ENCODE measurements at regions of chr14 and their contacts with region 1.

Region 1: DNA sequence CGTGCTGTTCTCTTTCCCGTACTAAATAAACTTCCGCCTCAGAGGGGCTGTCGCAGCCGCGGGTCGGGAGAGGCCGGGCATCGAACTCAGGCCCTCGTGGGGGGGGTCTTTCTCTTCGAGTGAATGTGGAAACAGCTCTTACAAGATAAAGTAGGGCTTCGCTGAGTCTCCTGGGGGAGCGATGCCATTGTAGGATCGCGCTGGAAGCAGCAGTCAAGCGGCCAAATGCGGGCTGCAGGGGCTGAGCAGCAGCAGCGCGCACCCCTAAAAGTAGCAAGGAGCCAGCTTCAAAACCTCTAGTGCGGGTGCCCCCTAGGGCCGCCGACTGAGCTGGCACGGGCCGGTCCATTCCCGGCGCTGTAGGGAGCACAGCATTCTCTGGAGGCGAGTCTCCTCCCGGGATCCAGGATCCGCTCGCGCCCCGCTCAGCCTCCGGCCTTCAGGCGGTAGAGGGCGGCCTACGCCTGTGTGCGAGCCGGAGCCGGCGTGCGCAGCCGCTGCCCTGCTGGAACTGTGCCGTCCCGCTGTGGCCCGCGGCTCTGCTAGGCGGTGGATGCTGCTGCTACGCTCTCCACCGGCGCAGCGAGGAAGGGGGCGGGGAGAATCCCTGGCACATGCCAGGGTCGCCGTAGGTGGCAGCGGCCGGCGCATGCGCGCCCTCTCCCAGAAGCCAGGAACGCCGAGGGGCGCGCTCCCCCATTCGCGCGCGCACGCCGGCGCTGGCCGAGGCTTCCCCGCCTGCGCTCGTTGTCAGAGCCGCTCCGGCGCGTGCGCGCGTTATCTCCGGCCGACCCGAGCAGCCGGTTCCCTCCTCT is at the start of gene FUT8:
- DNase-seq: peak; percentile 96
- total RNA-seq, gene FUT8: 12.5 TPM

Region 2: DNA sequence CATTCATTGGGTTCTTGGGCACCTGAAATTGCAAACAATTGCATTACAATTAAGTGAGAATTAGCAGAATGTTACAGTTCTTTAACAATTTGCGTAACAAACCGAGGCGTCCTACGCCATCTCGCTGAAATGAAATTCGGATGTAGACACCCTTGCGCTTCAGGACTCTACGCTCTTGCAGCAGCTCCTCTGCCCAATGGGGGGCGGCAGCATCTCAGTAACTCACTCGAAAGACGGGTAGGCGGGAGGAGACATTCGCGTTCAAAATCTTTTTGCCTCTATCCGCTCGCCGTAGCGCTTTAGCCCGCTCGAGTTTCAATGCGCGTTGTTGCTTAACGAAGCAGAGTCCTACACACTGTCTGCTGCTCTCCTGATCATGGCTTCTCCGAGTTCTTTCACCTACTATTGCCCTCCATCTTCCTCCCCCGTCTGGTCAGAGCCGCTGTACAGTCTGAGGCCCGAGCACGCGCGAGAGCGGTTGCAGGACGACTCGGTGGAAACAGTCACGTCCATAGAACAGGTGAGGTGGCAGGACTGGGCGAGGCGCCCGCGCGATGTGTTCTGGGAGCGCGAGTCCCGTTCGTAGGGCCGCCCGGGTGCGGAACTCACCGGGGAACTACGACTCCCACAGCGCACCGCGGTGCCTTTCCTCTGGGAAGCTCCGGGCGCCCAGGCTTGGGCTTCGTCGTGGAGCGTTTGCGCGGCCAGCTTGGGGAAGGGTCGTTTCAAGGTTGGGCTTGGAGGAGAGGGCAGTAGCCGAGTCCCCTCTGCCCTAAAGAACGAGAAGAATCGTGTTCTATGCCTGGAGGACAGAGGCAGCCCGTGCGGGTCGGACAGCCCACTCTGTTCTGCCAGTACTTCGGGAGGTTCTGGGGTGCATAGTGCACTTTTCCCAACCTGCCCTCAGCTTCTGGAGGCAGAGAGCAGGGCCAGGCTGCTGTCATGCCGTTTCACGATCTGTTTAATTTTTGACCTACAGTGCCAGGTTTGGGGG is 425.4 kb before region 1 on chr14 and contains the start of gene FNTB:
- intact Hi-C with region 1: loop called (anchors 2 kb)
- DNase-seq: peak; percentile 99
- total RNA-seq, gene FNTB: 18.7 TPM

Region 3: GRCh38 chr14:65164068-65164824 is 248.0 kb before region 1 on chr14:
- intact Hi-C with region 1: loop called (anchors 10 kb)
- DNase-seq: no peak

Region 4: GRCh38 chr14:65604936-65605335 is 192.7 kb after region 1 on chr14:
- intact Hi-C with region 1: loop called (anchors 10 kb)
- DNase-seq: no peak

Region 5: GRCh38 chr14:65958664-65959562 is 546.7 kb after region 1 on chr14:
- intact Hi-C with region 1: loop called (anchors 10 kb)
- DNase-seq: no peak